Calu3 (cell line): ENCODE measurements at regions of chr5 and their contacts with region 1.

Region 1: GRCh38 chr5:168537176-168537575 is 8.1 kb downstream of the FBLL1 start:
- DNase-seq: no peak
- H3K4me3 Mint-ChIP-seq: no peak overlapping the region
- H3K27ac Mint-ChIP-seq: no peak overlapping the region
- H3K4me1 Mint-ChIP-seq: no peaks in the 10 kb centered on the region
- H3K27me3 Mint-ChIP-seq: peaks cover 27% of the 10 kb centered on the region
- CTCF ChIP-seq: no peak

Region 2: DNA sequence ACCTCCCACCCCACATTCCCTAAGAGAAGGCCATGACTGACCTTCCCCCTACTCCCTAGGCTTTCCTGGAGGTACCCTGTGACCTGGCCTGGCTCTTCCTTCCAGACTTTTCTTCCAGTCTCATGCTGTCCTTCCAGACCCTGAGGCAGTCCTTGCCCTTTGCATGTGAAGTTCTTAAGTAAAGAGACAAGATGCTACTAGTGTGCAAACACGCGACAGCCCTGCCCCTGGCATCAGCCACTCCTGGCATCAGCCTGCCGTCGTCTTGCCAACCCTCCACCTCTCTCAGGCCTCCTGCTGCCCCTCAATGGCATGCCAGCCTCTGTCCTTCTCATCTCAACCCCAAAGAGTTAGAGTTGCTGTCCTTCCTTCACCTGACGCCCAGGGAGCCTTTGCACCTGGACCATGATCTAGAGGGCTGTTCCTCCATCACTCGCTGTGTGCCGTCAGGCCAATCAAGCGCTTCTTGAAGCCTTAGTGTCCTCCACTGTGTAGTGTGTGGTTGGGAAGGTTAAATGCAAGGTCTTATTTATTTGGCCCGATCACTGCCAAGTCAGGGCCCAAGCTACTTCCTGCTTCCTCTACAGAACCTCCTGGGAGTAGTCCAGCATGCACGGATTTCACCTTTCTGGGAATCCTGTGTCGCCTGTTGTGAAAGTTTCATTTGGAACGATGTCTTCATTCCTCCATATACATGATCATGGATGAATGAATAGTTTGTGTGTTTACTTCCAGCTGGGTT is 183.8 kb before region 1 on chr5:
- CTCF ChIA-PET with region 1: no interaction called
- intact Hi-C with region 1: no loop called
- DNase-seq: peak; percentile 49
- H3K4me3 Mint-ChIP-seq: peak overlapping the region; percentile 13
- H3K27ac Mint-ChIP-seq: peak overlapping the region; percentile 52
- H3K4me1 Mint-ChIP-seq: peaks cover 86% of the 10 kb centered on the region
- H3K27me3 Mint-ChIP-seq: no peaks in the 10 kb centered on the region
- CTCF ChIP-seq: no peak

Region 3: GRCh38 chr5:168502563-168503237 is 34.5 kb before region 1 on chr5:
- CTCF ChIA-PET with region 1: interaction called, 10 read pairs
- intact Hi-C with region 1: no loop called
- DNase-seq: no peak
- H3K4me3 Mint-ChIP-seq: no peak overlapping the region
- H3K27ac Mint-ChIP-seq: no peak overlapping the region
- H3K4me1 Mint-ChIP-seq: no peaks in the 10 kb centered on the region
- H3K27me3 Mint-ChIP-seq: no peaks in the 10 kb centered on the region
- CTCF ChIP-seq: no peak